CD4-positive, alpha-beta memory T cell (primary cell): ENCODE measurements at regions of chr10 and their contacts with region 1.

Region 1: GRCh38 chr10:37976091-37976879 is at the start of gene ZNF25:
- DNase-seq: peak; percentile 96 to 99 (median 97)
- H3K4me3 ChIP-seq: peak within 1 kb of the TSS; percentile 77 to 85
- H3K4me3 Mint-ChIP-seq: peak within 1 kb of the TSS; percentile 86 to 98 (median 93)
- H3K27ac ChIP-seq: peak within 1 kb of the TSS; percentile 94
- H3K27ac Mint-ChIP-seq: peak within 1 kb of the TSS; percentile 96 to 99 (median 97)
- H3K4me1 ChIP-seq: peaks cover 22% of the 10 kb centered on the region
- H3K4me1 Mint-ChIP-seq: peaks cover 20 to 31% (median 25%) of the 10 kb centered on the region in 4 donors
- H3K27me3 ChIP-seq: no peaks in the 10 kb centered on the region
- H3K27me3 Mint-ChIP-seq: no peaks in the 10 kb centered on the region
- total RNA-seq, gene ZNF25: 13.6 to 14.7 TPM

Region 2: GRCh38 chr10:37467246-37467645 is 509.0 kb before region 1 on chr10:
- CTCF ChIA-PET with region 1: no interaction called
- POLR2A ChIA-PET with region 1: no interaction called
- intact Hi-C with region 1: no loop called
- DNase-seq: no peak
- H3K4me3 ChIP-seq: no peak overlapping the region
- H3K4me3 Mint-ChIP-seq: no peak overlapping the region
- H3K27ac ChIP-seq: no peak overlapping the region
- H3K27ac Mint-ChIP-seq: no peak overlapping the region
- H3K4me1 ChIP-seq: no peaks in the 10 kb centered on the region
- H3K4me1 Mint-ChIP-seq: no peaks in the 10 kb centered on the region
- H3K27me3 ChIP-seq: no peaks in the 10 kb centered on the region
- H3K27me3 Mint-ChIP-seq: no peaks in the 10 kb centered on the region

Region 3: GRCh38 chr10:37857287-37858211 is 118.7 kb before region 1 on chr10 and contains the start of gene ZNF248:
- CTCF ChIA-PET with region 1: interaction called, 4 read pairs
- POLR2A ChIA-PET with region 1: interaction called, 10 read pairs
- intact Hi-C with region 1: loop called (anchors 1 kb)
- DNase-seq: peak; percentile 94 to 96 (median 95)
- H3K4me3 ChIP-seq: peak within 1 kb of the TSS; percentile 86 to 92
- H3K4me3 Mint-ChIP-seq: peak within 1 kb of the TSS; percentile 87 to 99 (median 91)
- H3K27ac ChIP-seq: peak within 1 kb of the TSS; percentile 97
- H3K27ac Mint-ChIP-seq: peak within 1 kb of the TSS; percentile 92 to 99 (median 98)
- H3K4me1 ChIP-seq: peaks cover 19% of the 10 kb centered on the region
- H3K4me1 Mint-ChIP-seq: peaks cover 28 to 48% (median 38%) of the 10 kb centered on the region in 4 donors
- H3K27me3 ChIP-seq: no peaks in the 10 kb centered on the region
- H3K27me3 Mint-ChIP-seq: no peaks in the 10 kb centered on the region
- total RNA-seq, gene ZNF248: 18.0 to 18.7 TPM

Region 4: GRCh38 chr10:38004123-38004522 is 27.8 kb after region 1 on chr10:
- CTCF ChIA-PET with region 1: interaction called, 18 read pairs
- POLR2A ChIA-PET with region 1: interaction called, 4 read pairs
- intact Hi-C with region 1: no loop called
- DNase-seq: no peak
- H3K4me3 ChIP-seq: no peak overlapping the region
- H3K4me3 Mint-ChIP-seq: no peak overlapping the region
- H3K27ac ChIP-seq: no peak overlapping the region
- H3K27ac Mint-ChIP-seq: no peak overlapping the region
- H3K4me1 ChIP-seq: no peaks in the 10 kb centered on the region
- H3K4me1 Mint-ChIP-seq: no peaks in the 10 kb centered on the region
- H3K27me3 ChIP-seq: no peaks in the 10 kb centered on the region
- H3K27me3 Mint-ChIP-seq: no peaks in the 10 kb centered on the region

Region 5: GRCh38 chr10:38010119-38010903 is 34.0 kb after region 1 on chr10 and contains the start of gene ZNF33A:
- CTCF ChIA-PET with region 1: interaction called, 48 read pairs
- POLR2A ChIA-PET with region 1: interaction called, 63 read pairs
- intact Hi-C with region 1: loop called (anchors 1 kb)
- DNase-seq: peak; percentile 93 to 96 (median 94)
- H3K4me3 ChIP-seq: peak within 1 kb of the TSS; percentile 69 to 83
- H3K4me3 Mint-ChIP-seq: peak within 1 kb of the TSS; percentile 86 to 98 (median 94)
- H3K27ac ChIP-seq: peak within 1 kb of the TSS; percentile 91
- H3K27ac Mint-ChIP-seq: peak within 1 kb of the TSS; percentile 99 to 100 (median 100)
- H3K4me1 ChIP-seq: peaks cover 37% of the 10 kb centered on the region
- H3K4me1 Mint-ChIP-seq: peaks cover 22 to 53% (median 38%) of the 10 kb centered on the region in 4 donors
- H3K27me3 ChIP-seq: no peaks in the 10 kb centered on the region
- H3K27me3 Mint-ChIP-seq: no peaks in the 10 kb centered on the region
- total RNA-seq, gene ZNF33A: 69.0 to 71.4 TPM